ENCODE measurements at regions of chr2 and their contacts with region 1.

Region 1: GRCh38 chr2:146068051-146068450 is 1548.1 kb upstream of the ZEB2 start:
- DNase-seq: no peak
- ATAC-seq: no peak
- H3K4me3 ChIP-seq: no peak overlapping the region
- H3K27ac ChIP-seq: no peak overlapping the region
- H3K4me1 ChIP-seq: no peaks in the 10 kb centered on the region
- H3K27me3 ChIP-seq: no peaks in the 10 kb centered on the region
- CTCF ChIP-seq: no peak

Region 2: GRCh38 chr2:146189541-146189940 is 121.5 kb after region 1 on chr2:
- CTCF ChIA-PET with region 1: no interaction called
- POLR2A ChIA-PET with region 1: no interaction called
- intact Hi-C with region 1: loop called (anchors 10 kb)
- DNase-seq: no peak
- ATAC-seq: no peak
- H3K4me3 ChIP-seq: no peak overlapping the region
- H3K27ac ChIP-seq: no peak overlapping the region
- H3K4me1 ChIP-seq: no peaks in the 10 kb centered on the region
- H3K27me3 ChIP-seq: no peaks in the 10 kb centered on the region
- CTCF ChIP-seq: no peak

Region 3: GRCh38 chr2:146587291-146587713 is 519.3 kb after region 1 on chr2:
- CTCF ChIA-PET with region 1: no interaction called
- POLR2A ChIA-PET with region 1: no interaction called
- intact Hi-C with region 1: no loop called
- DNase-seq: no peak
- ATAC-seq: no peak
- H3K4me3 ChIP-seq: no peak overlapping the region
- H3K27ac ChIP-seq: no peak overlapping the region
- H3K4me1 ChIP-seq: no peaks in the 10 kb centered on the region
- H3K27me3 ChIP-seq: no peaks in the 10 kb centered on the region
- CTCF ChIP-seq: no peak